ENCODE measurements at regions of chr13 and their contacts with region 1.

Region 1: DNA sequence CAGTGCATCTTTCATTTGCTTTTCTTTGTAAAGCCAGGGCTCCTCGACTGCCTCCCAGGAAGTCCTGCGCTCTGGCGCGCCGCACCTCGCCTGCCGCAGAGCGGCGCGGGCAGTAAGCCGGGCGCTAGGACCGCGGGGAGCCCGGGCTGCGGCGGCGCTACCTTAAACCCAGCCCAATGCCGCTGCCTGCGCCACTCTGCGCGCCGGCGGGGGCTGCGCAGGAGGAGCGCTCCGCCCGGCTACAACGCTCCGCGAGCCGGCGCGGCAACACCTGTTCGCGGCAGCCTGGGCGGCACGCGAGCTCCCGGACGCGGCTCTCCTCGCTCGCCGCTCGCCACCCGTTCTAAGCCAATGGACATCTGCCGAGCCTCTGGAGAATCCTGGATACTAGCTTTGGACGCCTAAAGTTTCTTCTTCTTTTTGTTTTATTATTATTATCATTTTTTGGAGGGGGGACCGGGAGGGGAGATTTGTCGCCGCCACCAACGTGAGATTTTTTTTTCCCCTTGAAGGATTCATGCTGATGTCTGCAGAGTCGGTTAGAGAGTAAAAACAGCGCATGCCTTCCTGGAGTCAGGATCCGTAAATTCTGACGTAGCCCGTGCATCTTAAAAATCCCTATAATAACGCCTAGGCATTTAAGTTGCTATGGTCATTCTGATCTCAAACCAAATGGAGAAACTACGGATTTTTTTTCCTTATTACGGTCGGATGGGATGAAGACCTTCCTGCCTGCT is at the start of gene FGF9:
- DNase-seq: peak; percentile 65 to 89 (median 81)
- ATAC-seq: peak; percentile 65 to 86 (median 84)
- H3K4me3 ChIP-seq: peak within 1 kb of the TSS; percentile 46 to 85 (median 66)
- H3K27ac ChIP-seq: peak within 1 kb of the TSS in 10 of 12 donors; percentile 38 to 77 (median 62)
- H3K4me1 ChIP-seq: peaks cover 0 to 61% (median 33%) of the 10 kb centered on the region in 12 donors
- H3K27me3 ChIP-seq: peaks cover 7 to 79% (median 29%) of the 10 kb centered on the region in 9 donors
- CTCF ChIP-seq: peak in 3 of 12 donors; percentile 3 to 22 (median 19)
- POLR2A ChIP-seq: peak in 1 of 2 donors; percentile 79
- total RNA-seq, gene FGF9: 1.9 to 12.5 (median 8.3) TPM

Region 2: GRCh38 chr13:21735701-21736401 is 64.8 kb after region 1 on chr13:
- intact Hi-C with region 1: loop called in 2 of 10 experiments (anchors 2 to 5 kb)
- DNase-seq: peak in 4 of 5 donors; percentile 27 to 64 (median 44)
- ATAC-seq: peak; percentile 91 to 95 (median 93)
- H3K4me3 ChIP-seq: peak overlapping the region in 8 of 12 donors; percentile 3 to 28 (median 14)
- H3K27ac ChIP-seq: peak overlapping the region; percentile 7 to 84 (median 60)
- H3K4me1 ChIP-seq: peaks cover 0 to 14% (median 0%) of the 10 kb centered on the region in 12 donors
- H3K27me3 ChIP-seq: no peaks in the 10 kb centered on the region
- CTCF ChIP-seq: peak in 1 of 12 donors; percentile 6
- POLR2A ChIP-seq: no peak

Region 3: DNA sequence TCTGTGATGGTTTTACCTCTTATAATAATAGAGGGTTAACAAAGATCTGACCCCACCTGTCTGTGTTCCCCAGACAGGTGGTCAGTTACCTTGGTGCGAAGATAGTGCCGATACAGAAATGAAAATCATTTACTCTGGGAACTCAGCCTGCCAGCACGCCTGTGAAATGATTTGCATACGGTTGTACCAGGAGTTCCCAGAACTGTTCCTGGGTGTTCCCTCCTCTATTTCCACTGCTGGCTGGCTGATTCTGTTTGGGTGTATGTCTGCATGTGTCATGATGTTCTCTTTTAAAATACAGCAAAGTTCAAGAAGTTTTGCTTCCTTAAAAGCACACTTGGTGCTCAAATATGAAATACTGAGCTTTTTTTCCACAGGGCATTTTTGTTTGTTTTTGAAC is 527.0 kb after region 1 on chr13:
- intact Hi-C with region 1: loop called in 1 of 10 experiments (anchors 10 kb)
- DNase-seq: no peak
- ATAC-seq: peak; percentile 76 to 88 (median 86)
- H3K4me3 ChIP-seq: peak overlapping the region in 3 of 12 donors; percentile 11 to 17 (median 13)
- H3K27ac ChIP-seq: peak overlapping the region in 3 of 12 donors; percentile 2 to 37 (median 15)
- H3K4me1 ChIP-seq: peaks cover 0 to 21% (median 8%) of the 10 kb centered on the region in 12 donors
- H3K27me3 ChIP-seq: no peaks in the 10 kb centered on the region
- CTCF ChIP-seq: no peak
- POLR2A ChIP-seq: peak in 1 of 2 donors; percentile 9

Region 4: DNA sequence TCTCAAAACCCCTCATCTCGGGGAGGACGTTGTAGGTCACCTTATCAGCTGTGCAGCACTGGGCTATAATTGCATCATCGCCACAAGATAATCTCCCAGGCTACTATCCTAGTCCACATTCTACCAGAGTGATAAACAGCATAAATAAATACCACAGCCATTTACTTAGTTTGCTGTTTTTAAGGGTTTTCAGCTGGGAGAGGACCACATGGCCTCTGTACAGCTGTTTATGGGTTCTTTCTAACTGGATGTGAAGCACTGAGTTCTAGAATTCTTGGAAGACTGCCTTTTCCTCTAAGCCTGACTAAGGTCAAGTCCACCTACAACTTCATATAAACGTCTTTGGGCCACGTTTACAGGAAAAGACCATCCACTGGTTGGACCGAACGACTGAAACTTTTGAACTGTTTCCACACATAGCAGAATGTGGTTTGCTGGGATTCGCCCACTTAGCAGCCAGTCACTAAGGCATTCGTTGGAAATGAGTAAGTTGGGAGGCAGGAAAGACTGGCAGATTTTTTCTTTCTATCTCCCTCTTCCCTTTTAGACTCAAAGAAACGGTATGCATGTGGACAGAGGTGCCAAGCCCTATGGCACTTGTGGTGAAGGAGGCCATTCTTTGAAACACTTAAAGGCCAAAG is 757.3 kb after region 1 on chr13:
- intact Hi-C with region 1: loop called in 2 of 10 experiments (anchors 10 kb)
- DNase-seq: peak in 4 of 5 donors; percentile 40 to 48 (median 46)
- ATAC-seq: peak; percentile 95 to 97 (median 96)
- H3K4me3 ChIP-seq: peak overlapping the region in 5 of 12 donors; percentile 2 to 24 (median 12)
- H3K27ac ChIP-seq: peak overlapping the region; percentile 39 to 87 (median 76)
- H3K4me1 ChIP-seq: peaks cover 0 to 34% (median 7%) of the 10 kb centered on the region in 12 donors
- H3K27me3 ChIP-seq: no peaks in the 10 kb centered on the region
- CTCF ChIP-seq: no peak
- POLR2A ChIP-seq: no peak

Measured in heart left ventricle (tissue), 16 donors.